IMR-90 (cell line): ENCODE measurements at regions of chr6 and their contacts with region 1.

Region 1: DNA sequence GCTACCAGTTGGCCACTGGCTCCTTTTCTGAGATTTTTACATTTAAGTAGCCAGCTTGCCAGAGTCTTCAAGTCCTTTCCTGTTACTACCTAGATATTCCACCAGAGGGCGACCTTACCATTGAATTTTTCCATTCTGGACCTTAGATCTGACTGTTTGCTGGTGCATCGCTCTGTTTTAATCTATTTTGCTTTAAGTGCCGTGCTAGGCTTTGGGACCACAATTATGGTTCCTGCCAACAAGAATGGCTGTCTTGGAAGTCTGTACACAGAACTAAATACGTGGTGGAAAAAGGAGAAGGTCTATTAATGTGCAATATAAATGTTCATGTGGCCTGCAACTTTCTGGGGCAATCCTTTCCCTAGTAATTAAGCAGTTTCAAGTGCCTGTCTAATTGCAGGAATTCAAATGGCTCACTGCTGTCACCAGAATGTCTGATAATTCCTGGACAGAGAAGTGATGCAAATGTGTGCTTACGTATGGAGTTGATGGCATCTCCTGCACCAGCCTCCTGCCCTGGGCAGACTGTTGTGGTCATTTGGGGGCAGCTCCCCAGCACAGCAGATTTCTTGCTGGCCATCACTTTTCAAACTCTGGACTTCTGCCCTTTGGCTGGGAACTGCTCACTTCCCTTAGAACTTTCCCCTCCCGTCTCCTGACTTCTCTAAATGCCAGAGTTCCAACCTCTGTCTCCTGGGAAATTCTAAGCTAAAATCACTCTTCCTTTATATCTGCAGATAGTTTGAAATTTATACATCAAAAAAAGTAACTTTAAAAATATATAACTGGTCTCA is 5.6 kb upstream of the HLA-DOA start:
- DNase-seq: peak; percentile 86
- ATAC-seq: peak; percentile 86
- H3K4me3 ChIP-seq: no peak overlapping the region
- H3K27ac ChIP-seq: no peak overlapping the region
- H3K4me1 ChIP-seq: no peaks in the 10 kb centered on the region; the same call in 1 of the 2 replicates
- H3K27me3 ChIP-seq: peaks cover 50% of the 10 kb centered on the region
- CTCF ChIP-seq: peak; percentile 78
- POLR2A ChIP-seq: no peak
- RAD21 ChIP-seq: peak; percentile 67

Region 2: DNA sequence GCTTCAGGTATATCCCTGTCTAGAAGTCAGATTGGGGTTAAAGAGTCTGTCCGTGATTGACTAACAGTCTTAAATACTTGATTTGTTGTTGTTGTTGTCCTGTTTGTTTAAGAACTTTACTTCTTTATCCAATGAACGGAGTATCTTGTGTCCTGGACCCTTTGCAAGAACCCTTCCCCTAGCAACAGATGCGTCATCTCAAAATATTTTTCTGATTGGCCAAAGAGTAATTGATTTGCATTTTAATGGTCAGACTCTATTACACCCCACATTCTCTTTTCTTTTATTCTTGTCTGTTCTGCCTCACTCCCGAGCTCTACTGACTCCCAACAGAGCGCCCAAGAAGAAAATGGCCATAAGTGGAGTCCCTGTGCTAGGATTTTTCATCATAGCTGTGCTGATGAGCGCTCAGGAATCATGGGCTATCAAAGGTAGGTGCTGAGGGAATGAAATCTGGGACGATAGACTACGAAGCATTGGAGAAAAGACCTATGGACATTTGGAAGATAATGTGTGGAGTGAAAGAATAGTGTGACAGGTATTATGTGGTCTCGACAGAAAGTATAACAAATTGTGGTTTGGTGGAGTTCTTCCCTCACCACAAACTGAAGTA is 575.3 kb before region 1 on chr6 and contains the start of gene HLA-DRA:
- CTCF ChIA-PET with region 1: no interaction called
- POLR2A ChIA-PET with region 1: no interaction called
- dilution Hi-C with region 1: no loop called
- in situ Hi-C with region 1: no loop called
- intact Hi-C with region 1: no loop called
- DNase-seq: peak; percentile 33
- ATAC-seq: peak; percentile 87
- H3K4me3 ChIP-seq: no peak within 1 kb of the TSS
- H3K27ac ChIP-seq: no peak within 1 kb of the TSS
- H3K4me1 ChIP-seq: no peaks in the 10 kb centered on the region
- H3K27me3 ChIP-seq: no peaks in the 10 kb centered on the region; the same call in 1 of the 2 replicates
- CTCF ChIP-seq: no peak
- POLR2A ChIP-seq: no peak
- RAD21 ChIP-seq: no peak
- total RNA-seq, gene HLA-DRA: not detected in 2 replicates

Region 3: DNA sequence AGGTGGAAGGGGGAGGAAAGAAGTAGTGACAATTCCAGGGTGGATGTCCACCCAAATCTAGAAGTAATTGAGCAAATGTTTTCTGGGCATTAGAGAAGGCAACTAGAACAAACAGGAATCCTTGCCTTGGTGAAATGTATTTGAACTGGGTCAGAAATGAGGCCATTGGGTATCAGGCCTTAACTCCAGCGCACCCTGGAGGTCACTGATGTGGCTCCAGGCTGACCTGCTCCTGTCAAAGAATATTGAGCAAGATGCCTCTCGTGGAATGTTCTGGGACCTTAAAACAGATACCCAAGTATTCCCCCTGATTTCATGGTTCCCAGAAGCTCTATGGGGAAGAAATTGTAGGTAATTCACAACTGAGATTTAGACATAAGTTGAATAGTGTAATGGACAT is 67.7 kb after region 1 on chr6:
- CTCF ChIA-PET with region 1: no interaction called
- POLR2A ChIA-PET with region 1: no interaction called
- dilution Hi-C with region 1: no loop called
- in situ Hi-C with region 1: no loop called
- intact Hi-C with region 1: loop called (anchors 2 kb)
- DNase-seq: peak; percentile 13
- ATAC-seq: peak; percentile 46
- H3K4me3 ChIP-seq: no peak overlapping the region
- H3K27ac ChIP-seq: no peak overlapping the region
- H3K4me1 ChIP-seq: no peaks in the 10 kb centered on the region; the same call in 1 of the 2 replicates
- H3K27me3 ChIP-seq: peaks cover 17% of the 10 kb centered on the region
- CTCF ChIP-seq: peak; percentile 51
- POLR2A ChIP-seq: no peak
- RAD21 ChIP-seq: peak; percentile 34

Region 4: GRCh38 chr6:33147807-33148666 is 133.0 kb after region 1 on chr6:
- CTCF ChIA-PET with region 1: interaction called, 4 read pairs
- POLR2A ChIA-PET with region 1: no interaction called
- dilution Hi-C with region 1: no loop called
- in situ Hi-C with region 1: no loop called
- intact Hi-C with region 1: loop called (anchors 1 kb)
- DNase-seq: peak; percentile 58
- ATAC-seq: peak; percentile 90
- H3K4me3 ChIP-seq: no peak overlapping the region
- H3K27ac ChIP-seq: no peak overlapping the region
- H3K4me1 ChIP-seq: no peaks in the 10 kb centered on the region
- H3K27me3 ChIP-seq: peaks cover 16% of the 10 kb centered on the region
- CTCF ChIP-seq: peak; percentile 79
- POLR2A ChIP-seq: no peak
- RAD21 ChIP-seq: peak; percentile 65

Region 5: GRCh38 chr6:33161354-33162331 is 146.6 kb after region 1 on chr6:
- CTCF ChIA-PET with region 1: interaction called, 3 read pairs
- POLR2A ChIA-PET with region 1: no interaction called
- dilution Hi-C with region 1: no loop called
- in situ Hi-C with region 1: loop called (anchors 10 kb)
- intact Hi-C with region 1: no loop called
- DNase-seq: peak; percentile 28
- ATAC-seq: peak; percentile 93
- H3K4me3 ChIP-seq: peak overlapping the region; percentile 52
- H3K27ac ChIP-seq: peak overlapping the region; percentile 54
- H3K4me1 ChIP-seq: peaks cover 9% of the 10 kb centered on the region
- H3K27me3 ChIP-seq: peaks cover 7% of the 10 kb centered on the region
- CTCF ChIP-seq: peak; percentile 82
- POLR2A ChIP-seq: no peak
- RAD21 ChIP-seq: peak; percentile 62

Region 6: DNA sequence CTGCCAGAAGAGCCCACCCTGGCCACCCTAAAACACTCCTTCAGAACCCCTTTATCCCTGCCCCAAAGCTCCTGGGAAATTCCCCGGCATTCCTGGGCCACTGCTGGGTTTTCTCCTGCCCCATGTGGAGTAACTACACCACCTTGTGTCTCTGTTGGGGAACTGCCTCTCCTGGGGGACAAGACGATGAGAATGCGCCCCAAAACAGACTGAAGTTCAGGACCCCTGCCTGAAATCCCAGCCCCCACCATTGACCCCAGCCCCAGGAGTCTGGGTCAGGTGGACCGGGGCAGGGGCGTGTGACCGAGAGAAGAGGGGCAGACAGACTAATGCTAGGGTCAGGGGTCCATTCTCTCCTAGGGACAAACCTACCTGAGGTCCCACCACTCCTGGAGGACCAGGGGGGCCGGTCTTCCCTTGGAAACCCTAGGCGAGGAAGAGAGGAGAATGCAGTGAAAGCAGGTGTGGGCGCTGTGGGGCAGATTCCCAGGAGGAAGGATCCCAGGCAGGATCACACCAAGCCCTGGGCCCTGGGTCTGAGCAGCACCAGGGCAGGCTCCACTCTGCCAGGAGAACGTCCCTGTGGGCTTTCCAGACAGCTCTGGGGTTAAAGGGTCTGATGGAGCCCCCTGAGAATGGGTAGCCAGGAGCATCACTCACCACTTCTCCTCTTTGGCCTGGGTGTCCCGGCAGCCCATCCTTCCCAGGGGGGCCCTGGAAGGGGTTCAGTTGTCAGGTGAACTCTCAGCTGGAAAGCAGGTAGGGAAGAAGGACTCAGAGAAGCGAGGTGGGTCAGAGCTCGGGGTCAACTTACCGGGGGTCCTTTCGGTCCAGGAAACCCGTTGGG is 157.9 kb after region 1 on chr6:
- CTCF ChIA-PET with region 1: no interaction called
- POLR2A ChIA-PET with region 1: no interaction called
- dilution Hi-C with region 1: no loop called
- in situ Hi-C with region 1: loop called (anchors 10 kb)
- intact Hi-C with region 1: loop called (anchors 1 kb)
- DNase-seq: peak; percentile 49
- ATAC-seq: peak; percentile 93
- H3K4me3 ChIP-seq: no peak overlapping the region
- H3K27ac ChIP-seq: no peak overlapping the region
- H3K4me1 ChIP-seq: no peaks in the 10 kb centered on the region
- H3K27me3 ChIP-seq: peaks cover 13% of the 10 kb centered on the region; the same call in 1 of the 2 replicates
- CTCF ChIP-seq: peak; percentile 77
- POLR2A ChIP-seq: no peak
- RAD21 ChIP-seq: peak; percentile 80